Panc1 (cell line): ENCODE measurements at regions of chr3 and their contacts with region 1.

Region 1: GRCh38 chr3:170961616-170962400 is 53.4 kb upstream of the EIF5A2 start:
- DNase-seq: peak; percentile 15
- ATAC-seq: 0 out of 2 replicates have a peak, but pooled peaks have one; percentile 48
- H3K4me3 ChIP-seq: no peak overlapping the region
- H3K27ac ChIP-seq: no peak overlapping the region
- H3K4me1 ChIP-seq: no peaks in the 10 kb centered on the region
- H3K27me3 ChIP-seq: no peaks in the 10 kb centered on the region
- CTCF ChIP-seq: peak; percentile 72

Region 2: DNA sequence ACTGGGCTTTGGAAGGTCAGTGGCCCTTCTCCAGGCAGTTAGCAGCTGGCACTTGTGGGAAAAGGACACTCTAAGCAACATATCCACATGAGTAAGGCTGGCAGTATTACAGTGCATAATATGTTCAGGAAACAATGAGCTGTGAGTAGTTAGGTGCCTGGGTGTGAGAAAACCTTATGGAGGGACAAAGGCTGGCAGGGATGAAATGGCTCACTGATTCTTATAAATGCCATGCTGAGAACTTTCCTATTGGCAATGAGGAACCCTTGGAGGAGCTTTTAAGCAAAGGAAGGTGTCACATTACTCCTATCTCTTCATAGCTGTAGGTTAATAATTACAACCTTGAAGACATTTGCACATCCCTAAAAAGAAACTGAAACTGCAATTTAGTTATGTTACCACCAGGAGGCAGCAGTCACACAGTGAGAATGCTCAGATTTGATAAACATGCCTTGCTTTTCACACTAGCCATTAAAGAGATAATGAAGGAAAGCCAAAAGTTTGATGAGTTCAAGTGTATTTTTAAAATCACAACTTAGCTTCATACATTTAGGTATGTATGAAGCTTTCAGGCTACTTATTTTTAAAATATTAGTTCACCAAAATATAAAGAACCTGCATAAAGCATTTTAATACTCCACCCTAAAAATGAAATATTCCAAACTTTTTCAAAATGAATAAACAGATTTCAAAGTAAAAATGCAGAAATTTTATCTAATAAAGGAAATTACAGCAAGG is 201.3 kb after region 1 on chr3:
- CTCF ChIA-PET with region 1: interaction called, 3 read pairs
- POLR2A ChIA-PET with region 1: no interaction called
- in situ Hi-C with region 1: no loop called
- intact Hi-C with region 1: loop called (anchors 5 kb)
- DNase-seq: no peak
- ATAC-seq: no peak
- H3K4me3 ChIP-seq: no peak overlapping the region
- H3K27ac ChIP-seq: no peak overlapping the region
- H3K4me1 ChIP-seq: no peaks in the 10 kb centered on the region
- H3K27me3 ChIP-seq: no peaks in the 10 kb centered on the region
- CTCF ChIP-seq: peak; percentile 76